ENCODE measurements at regions of chr3 and their contacts with region 1.

Region 1: GRCh38 chr3:176872771-176873209 is 324.5 kb downstream of the TBL1XR1 start:
- DNase-seq: peak; percentile 11 to 70 (median 55)
- ATAC-seq: peak; percentile 82
- H3K4me3 ChIP-seq: no peak overlapping the region
- H3K4me3 Mint-ChIP-seq: no peak overlapping the region
- H3K27ac ChIP-seq: no peak overlapping the region
- H3K27ac Mint-ChIP-seq: no peak overlapping the region
- H3K4me1 ChIP-seq: no peaks in the 10 kb centered on the region
- H3K4me1 Mint-ChIP-seq: peaks cover 4% of the 10 kb centered on the region
- H3K27me3 ChIP-seq: no peaks in the 10 kb centered on the region
- H3K27me3 Mint-ChIP-seq: peaks cover 4% of the 10 kb centered on the region
- CTCF ChIP-seq: peak; percentile 66

Region 2: GRCh38 chr3:176939022-176939817 is 66.4 kb after region 1 on chr3:
- CTCF ChIA-PET with region 1: interaction called, 16 read pairs
- POLR2A ChIA-PET with region 1: no interaction called
- intact Hi-C with region 1: loop called (anchors 1 to 2 kb)
- DNase-seq: peak in 6 of 9 experiments; percentile 4 to 60 (median 16)
- ATAC-seq: no peak
- H3K4me3 ChIP-seq: no peak overlapping the region
- H3K4me3 Mint-ChIP-seq: no peak overlapping the region
- H3K27ac ChIP-seq: no peak overlapping the region
- H3K27ac Mint-ChIP-seq: no peak overlapping the region
- H3K4me1 ChIP-seq: no peaks in the 10 kb centered on the region
- H3K4me1 Mint-ChIP-seq: no peaks in the 10 kb centered on the region
- H3K27me3 ChIP-seq: no peaks in the 10 kb centered on the region
- H3K27me3 Mint-ChIP-seq: peaks cover 4% of the 10 kb centered on the region
- CTCF ChIP-seq: peak; percentile 76

Region 3: GRCh38 chr3:178325330-178325729 is 1452.5 kb after region 1 on chr3:
- CTCF ChIA-PET with region 1: no interaction called
- POLR2A ChIA-PET with region 1: no interaction called
- intact Hi-C with region 1: loop called (anchors 1 to 2 kb)
- DNase-seq: peak in 1 of 9 experiments; percentile 6
- ATAC-seq: no peak
- H3K4me3 ChIP-seq: no peak overlapping the region
- H3K4me3 Mint-ChIP-seq: no peak overlapping the region
- H3K27ac ChIP-seq: no peak overlapping the region
- H3K27ac Mint-ChIP-seq: no peak overlapping the region
- H3K4me1 ChIP-seq: no peaks in the 10 kb centered on the region
- H3K4me1 Mint-ChIP-seq: no peaks in the 10 kb centered on the region
- H3K27me3 ChIP-seq: no peaks in the 10 kb centered on the region
- H3K27me3 Mint-ChIP-seq: no peaks in the 10 kb centered on the region
- CTCF ChIP-seq: peak; percentile 35

Region 4: GRCh38 chr3:178385280-178385952 is 1512.6 kb after region 1 on chr3:
- CTCF ChIA-PET with region 1: interaction called, 20 read pairs
- POLR2A ChIA-PET with region 1: no interaction called
- intact Hi-C with region 1: loop called in 1 of 2 experiments (anchors 1 kb)
- DNase-seq: peak in 3 of 9 experiments; percentile 16 to 51 (median 39)
- ATAC-seq: peak; percentile 40
- H3K4me3 ChIP-seq: no peak overlapping the region
- H3K4me3 Mint-ChIP-seq: no peak overlapping the region
- H3K27ac ChIP-seq: no peak overlapping the region
- H3K27ac Mint-ChIP-seq: no peak overlapping the region
- H3K4me1 ChIP-seq: no peaks in the 10 kb centered on the region
- H3K4me1 Mint-ChIP-seq: no peaks in the 10 kb centered on the region
- H3K27me3 ChIP-seq: no peaks in the 10 kb centered on the region
- H3K27me3 Mint-ChIP-seq: peaks cover under 1% of the 10 kb centered on the region
- CTCF ChIP-seq: peak; percentile 82

Measured in CD8-positive, alpha-beta T cell (primary cell).